WTC11 (cell line): ENCODE measurements at regions of chr19 and their contacts with region 1.

Region 1: DNA sequence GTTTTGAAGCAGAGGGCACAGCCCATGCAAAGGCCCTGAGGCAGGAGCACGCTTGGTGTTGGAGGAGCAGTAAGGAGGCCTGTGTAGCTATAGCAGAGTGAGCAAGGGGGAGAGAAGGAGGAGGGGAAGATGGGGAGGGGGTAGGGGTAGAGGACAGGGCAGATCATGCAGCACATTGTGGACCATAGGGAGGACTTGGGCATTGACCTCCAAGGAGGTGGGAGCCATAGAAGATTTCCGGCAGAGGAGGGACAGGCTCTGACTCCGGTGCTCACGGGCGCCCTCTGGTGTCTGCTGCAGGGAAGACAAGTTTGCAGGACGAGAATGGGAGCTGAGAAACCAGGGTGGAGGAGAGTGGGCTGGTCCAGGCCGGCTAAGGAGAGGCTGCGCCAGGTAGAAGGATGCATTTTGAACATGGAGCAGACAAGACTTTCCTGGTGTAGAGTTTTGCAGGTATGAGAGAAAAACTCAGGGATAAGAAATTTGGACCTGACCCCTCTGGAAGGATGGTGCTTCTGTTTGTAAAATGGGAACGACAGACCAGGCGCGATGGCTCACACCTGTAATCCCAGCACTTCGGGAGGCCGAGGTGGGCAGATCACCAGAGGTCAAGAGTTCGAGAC is 13.7 kb upstream of the CREB3L3 start:
- DNase-seq: peak; percentile 94
- ATAC-seq: peak; percentile 81
- H3K4me3 Mint-ChIP-seq: peak overlapping the region; percentile 31; the same call in 1 of the 2 replicates
- H3K27ac Mint-ChIP-seq: peak overlapping the region; percentile 70; the same call in 1 of the 2 replicates
- H3K4me1 Mint-ChIP-seq: peaks cover 6% of the 10 kb centered on the region
- H3K27me3 Mint-ChIP-seq: peaks cover 18% of the 10 kb centered on the region
- CTCF ChIP-seq: peak; percentile 94

Region 2: GRCh38 chr19:3762501-3763459 is 376.9 kb before region 1 on chr19 and contains the start of gene MRPL54:
- CTCF ChIA-PET with region 1: interaction called, 11 read pairs
- POLR2A ChIA-PET with region 1: no interaction called
- DNase-seq: peak; percentile 99
- ATAC-seq: peak; percentile 91
- H3K4me3 Mint-ChIP-seq: peak within 1 kb of the TSS; percentile 97
- H3K27ac Mint-ChIP-seq: peak within 1 kb of the TSS; percentile 95
- H3K4me1 Mint-ChIP-seq: peaks cover 8% of the 10 kb centered on the region
- H3K27me3 Mint-ChIP-seq: peaks cover 3% of the 10 kb centered on the region; the same call in 1 of the 2 replicates
- CTCF ChIP-seq: no peak
- total RNA-seq, gene MRPL54: 60.9 to 65.3 TPM (median 62.3 TPM) in 3 replicates

Region 3: DNA sequence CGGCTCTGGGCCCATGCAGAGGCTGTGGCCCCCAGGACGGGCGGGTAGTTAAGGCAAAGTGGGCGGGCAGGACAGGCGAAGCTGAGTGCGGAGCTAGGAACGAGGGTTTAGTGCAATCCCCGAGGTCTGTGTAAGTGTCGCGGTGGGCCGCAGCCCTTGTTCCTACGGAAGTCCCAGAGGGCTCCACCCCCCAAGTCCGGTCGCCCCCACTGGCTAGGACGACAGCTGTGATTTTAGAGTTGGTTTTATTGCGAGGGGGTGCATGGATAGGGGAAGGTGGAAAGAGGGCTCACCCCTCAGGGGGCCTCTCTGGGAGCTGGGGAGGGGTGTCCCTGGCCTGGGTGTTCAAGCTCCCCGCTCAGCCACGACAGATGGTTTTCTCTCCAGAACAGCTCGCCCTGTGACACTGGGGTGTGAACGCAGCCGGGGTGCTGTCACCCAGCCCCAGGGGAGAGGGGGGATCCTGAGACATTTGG is 94.7 kb before region 1 on chr19:
- CTCF ChIA-PET with region 1: interaction called, 12 read pairs
- POLR2A ChIA-PET with region 1: no interaction called
- DNase-seq: no peak
- ATAC-seq: peak; percentile 36; the same call in 1 of the 2 replicates
- H3K4me3 Mint-ChIP-seq: no peak overlapping the region
- H3K27ac Mint-ChIP-seq: no peak overlapping the region
- H3K4me1 Mint-ChIP-seq: peaks cover 9% of the 10 kb centered on the region; the same call in 1 of the 2 replicates
- H3K27me3 Mint-ChIP-seq: no peaks in the 10 kb centered on the region; the same call in 1 of the 2 replicates
- CTCF ChIP-seq: no peak

Region 4: DNA sequence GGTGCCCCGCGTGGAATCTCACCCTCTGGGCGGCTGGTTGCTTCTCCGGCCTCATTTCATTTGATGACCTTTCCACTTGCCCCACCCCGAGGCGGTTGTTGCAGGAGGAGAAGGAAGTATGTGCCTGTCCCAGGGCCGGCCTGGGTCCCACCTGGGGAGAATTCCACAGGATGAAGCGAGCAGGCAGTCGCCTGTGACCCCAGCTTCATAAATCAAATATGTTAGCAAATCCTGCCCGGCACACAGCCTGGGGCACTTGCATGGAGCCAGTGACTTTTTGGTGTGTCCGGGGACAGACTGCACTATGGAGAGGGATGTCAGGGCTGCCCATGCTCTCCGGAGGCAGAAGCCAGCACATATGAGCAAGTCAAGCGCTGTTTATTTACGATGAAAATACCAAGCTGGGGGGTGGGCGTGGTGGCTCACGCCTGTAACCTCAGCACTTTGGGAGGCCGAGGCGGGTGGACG is 53.3 kb before region 1 on chr19:
- CTCF ChIA-PET with region 1: interaction called, 14 read pairs
- POLR2A ChIA-PET with region 1: no interaction called
- DNase-seq: no peak
- ATAC-seq: no peak
- H3K4me3 Mint-ChIP-seq: no peak overlapping the region
- H3K27ac Mint-ChIP-seq: peak overlapping the region; percentile 45; the same call in 1 of the 2 replicates
- H3K4me1 Mint-ChIP-seq: peaks cover 3% of the 10 kb centered on the region
- H3K27me3 Mint-ChIP-seq: no peaks in the 10 kb centered on the region
- CTCF ChIP-seq: no peak

Region 5: GRCh38 chr19:4152241-4152998 is 12.7 kb after region 1 on chr19:
- CTCF ChIA-PET with region 1: interaction called, 49 read pairs
- POLR2A ChIA-PET with region 1: no interaction called
- DNase-seq: no peak
- ATAC-seq: no peak
- H3K4me3 Mint-ChIP-seq: no peak overlapping the region
- H3K27ac Mint-ChIP-seq: no peak overlapping the region
- H3K4me1 Mint-ChIP-seq: no peaks in the 10 kb centered on the region
- H3K27me3 Mint-ChIP-seq: peaks cover 15% of the 10 kb centered on the region
- CTCF ChIP-seq: no peak

Region 6: GRCh38 chr19:4197625-4198466 is 58.1 kb after region 1 on chr19:
- CTCF ChIA-PET with region 1: interaction called, 50 read pairs
- POLR2A ChIA-PET with region 1: no interaction called
- DNase-seq: peak; percentile 77
- ATAC-seq: peak; percentile 72
- H3K4me3 Mint-ChIP-seq: peak overlapping the region; percentile 70
- H3K27ac Mint-ChIP-seq: no peak overlapping the region; the same call in 1 of the 2 replicates
- H3K4me1 Mint-ChIP-seq: peaks cover 23% of the 10 kb centered on the region
- H3K27me3 Mint-ChIP-seq: peaks cover 53% of the 10 kb centered on the region
- CTCF ChIP-seq: no peak